ENCODE measurements at regions of chr2 and their contacts with region 1.

Region 1: DNA sequence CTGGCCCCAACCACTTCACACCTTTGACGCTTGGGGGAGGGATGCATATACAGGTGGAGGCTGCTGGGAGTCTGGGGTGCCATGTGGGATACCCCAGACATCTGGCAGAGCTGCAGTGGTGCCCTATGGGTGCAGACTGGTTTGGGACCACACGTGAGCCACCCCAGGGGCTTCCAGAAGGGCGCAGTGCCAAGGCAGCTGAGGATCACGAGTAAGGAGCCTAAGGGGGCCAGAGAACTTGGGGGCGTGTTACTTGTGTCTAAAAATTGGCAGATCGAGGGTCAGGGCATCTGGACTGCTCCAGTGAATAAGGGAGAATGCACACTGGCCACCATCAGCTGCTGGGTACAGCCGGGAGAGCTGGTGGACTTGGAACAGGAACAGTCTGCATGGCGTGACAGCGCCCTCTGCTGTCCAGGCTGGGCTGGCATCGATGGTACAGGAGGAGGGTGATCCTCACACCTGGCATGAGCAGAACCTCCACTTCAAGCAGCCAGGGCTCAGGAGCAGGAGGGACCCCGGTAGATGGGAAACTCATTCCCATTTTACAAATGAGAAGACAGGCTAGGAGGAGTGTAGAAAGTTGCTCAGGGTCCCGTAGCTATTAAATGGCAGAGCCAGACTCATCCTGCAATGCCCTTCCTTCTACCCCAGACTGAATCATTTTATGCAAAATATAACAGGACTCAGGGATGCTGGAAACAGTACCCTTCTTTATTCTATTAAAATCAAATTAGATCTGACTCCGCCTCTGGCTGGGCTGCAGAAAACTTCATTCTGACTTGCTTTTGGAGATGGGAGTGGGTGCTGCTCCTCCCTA is 60.4 kb downstream of the ATOH8 start:
- DNase-seq: peak; percentile 88 to 95 (median 89)
- ATAC-seq: peak; percentile 93 to 96 (median 96)
- H3K4me3 ChIP-seq: no peak overlapping the region
- H3K27ac ChIP-seq: no peak overlapping the region
- H3K4me1 ChIP-seq: peaks cover 0 to 22% (median 12%) of the 10 kb centered on the region in 12 donors
- H3K27me3 ChIP-seq: no peaks in the 10 kb centered on the region
- CTCF ChIP-seq: peak; percentile 91 to 99 (median 94)
- POLR2A ChIP-seq: no peak

Region 2: GRCh38 chr2:85635636-85636035 is 178.6 kb before region 1 on chr2:
- intact Hi-C with region 1: loop called (anchors 1 to 10 kb)
- DNase-seq: no peak
- ATAC-seq: peak in 2 of 4 donors; percentile 59 to 69
- H3K4me3 ChIP-seq: no peak overlapping the region
- H3K27ac ChIP-seq: peak overlapping the region in 1 of 12 donors; percentile 3
- H3K4me1 ChIP-seq: peaks cover 0 to 8% (median 0%) of the 10 kb centered on the region in 12 donors
- H3K27me3 ChIP-seq: no peaks in the 10 kb centered on the region
- CTCF ChIP-seq: no peak
- POLR2A ChIP-seq: no peak

Region 3: GRCh38 chr2:85648619-85649018 is 165.6 kb before region 1 on chr2:
- intact Hi-C with region 1: loop called in 3 of 10 experiments (anchors 2 to 5 kb)
- DNase-seq: peak in 1 of 5 donors; percentile 37
- ATAC-seq: peak in 3 of 4 donors; percentile 35 to 60 (median 38)
- H3K4me3 ChIP-seq: no peak overlapping the region
- H3K27ac ChIP-seq: peak overlapping the region in 8 of 12 donors; percentile 13 to 68 (median 46)
- H3K4me1 ChIP-seq: peaks cover 0 to 16% (median 11%) of the 10 kb centered on the region in 12 donors
- H3K27me3 ChIP-seq: no peaks in the 10 kb centered on the region
- CTCF ChIP-seq: peak; percentile 8 to 56 (median 42)
- POLR2A ChIP-seq: no peak

Region 4: DNA sequence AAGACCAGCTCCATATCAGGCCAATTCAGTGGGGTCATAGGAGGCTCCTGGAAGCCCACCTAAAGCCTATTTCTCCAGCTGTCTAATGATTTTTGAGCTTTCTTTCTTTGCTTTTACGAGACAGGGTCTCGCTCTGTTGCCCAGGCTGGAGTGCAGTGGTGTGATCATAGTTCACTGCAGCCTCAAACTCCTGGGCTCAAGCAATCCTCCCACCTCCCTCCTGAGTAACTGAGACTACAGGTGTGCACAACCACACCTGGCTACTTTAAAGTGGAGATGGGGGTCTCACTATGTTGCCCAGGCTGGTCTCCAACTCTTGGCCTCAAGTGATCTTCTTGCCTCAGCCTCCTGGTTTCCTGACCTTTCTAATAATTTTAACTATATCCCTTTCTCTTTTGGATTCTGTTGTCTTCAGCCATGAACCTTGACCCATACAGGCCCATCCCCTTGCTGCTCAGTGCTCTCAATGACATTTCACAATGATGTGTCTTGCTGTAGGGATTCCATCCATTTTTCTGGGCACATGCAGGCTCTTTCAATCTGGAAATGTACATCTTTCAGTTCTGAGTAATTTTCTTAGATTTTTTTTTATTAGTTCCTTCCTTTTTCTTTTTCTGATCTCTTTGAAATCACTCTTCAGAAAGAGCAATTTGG is 90.4 kb before region 1 on chr2:
- intact Hi-C with region 1: loop called (anchors 1 to 2 kb)
- DNase-seq: no peak
- ATAC-seq: no peak
- H3K4me3 ChIP-seq: no peak overlapping the region
- H3K27ac ChIP-seq: peak overlapping the region in 1 of 12 donors; percentile 28
- H3K4me1 ChIP-seq: peaks cover 0 to 47% (median 20%) of the 10 kb centered on the region in 12 donors
- H3K27me3 ChIP-seq: no peaks in the 10 kb centered on the region
- CTCF ChIP-seq: no peak
- POLR2A ChIP-seq: no peak

Region 5: GRCh38 chr2:85737481-85737880 is 76.7 kb before region 1 on chr2:
- intact Hi-C with region 1: no loop called
- DNase-seq: peak in 4 of 5 donors; percentile 72 to 78 (median 73)
- ATAC-seq: peak; percentile 44 to 69 (median 60)
- H3K4me3 ChIP-seq: no peak overlapping the region
- H3K27ac ChIP-seq: peak overlapping the region in 9 of 12 donors; percentile 31 to 69 (median 56)
- H3K4me1 ChIP-seq: peaks cover 0 to 66% (median 33%) of the 10 kb centered on the region in 12 donors
- H3K27me3 ChIP-seq: no peaks in the 10 kb centered on the region
- CTCF ChIP-seq: no peak
- POLR2A ChIP-seq: no peak

Region 6: DNA sequence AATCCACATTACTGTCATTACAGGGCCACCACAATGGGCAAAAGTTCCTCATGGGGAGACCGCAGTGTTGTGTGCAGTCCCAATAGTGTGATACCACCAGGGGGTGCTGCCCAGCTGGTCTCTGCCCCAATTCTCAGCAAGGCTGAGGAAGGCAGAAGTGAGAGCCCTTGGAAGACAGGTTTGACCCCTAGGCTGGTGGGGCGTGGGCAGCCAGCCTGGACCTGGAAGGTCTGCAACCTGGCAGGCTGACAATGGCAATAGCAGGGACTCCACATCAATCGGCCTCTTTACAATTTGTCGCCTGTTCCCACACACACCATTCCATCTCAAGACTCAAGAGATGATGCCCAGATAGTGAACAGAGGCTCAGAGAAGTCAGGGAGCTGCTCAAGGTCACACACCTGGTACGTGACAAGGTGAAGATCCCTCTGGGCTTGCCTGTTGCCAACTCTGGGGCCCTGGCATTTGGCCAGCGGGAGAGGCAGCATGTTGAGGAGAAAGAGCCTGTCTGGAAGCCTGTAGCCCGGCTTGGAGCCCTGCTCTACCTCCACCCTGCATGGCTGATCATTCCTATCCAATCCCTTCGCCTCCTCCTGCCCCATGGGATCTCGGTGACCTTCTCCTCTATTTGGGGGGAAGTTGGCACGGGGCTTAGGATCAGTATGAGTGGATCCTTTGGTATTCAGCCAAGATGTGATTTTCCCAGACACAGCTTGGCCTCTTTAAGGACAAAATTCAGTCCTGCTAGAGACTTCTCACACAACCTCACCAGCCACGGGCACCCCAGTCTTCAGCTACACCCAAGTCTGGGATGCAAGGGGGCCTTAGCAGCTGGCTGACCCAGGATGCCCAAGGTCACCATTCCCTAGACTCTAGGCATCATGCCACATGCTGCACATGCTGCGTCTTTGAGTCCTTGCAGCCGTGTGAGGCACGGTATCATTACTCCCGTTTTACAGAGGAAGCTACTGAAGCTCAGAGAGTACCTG is 63.3 kb before region 1 on chr2:
- intact Hi-C with region 1: loop called in 3 of 10 experiments (anchors 1 to 5 kb)
- DNase-seq: peak; percentile 75 to 84 (median 81)
- ATAC-seq: peak; percentile 57 to 71 (median 62)
- H3K4me3 ChIP-seq: peak overlapping the region in 1 of 12 donors; percentile 10
- H3K27ac ChIP-seq: peak overlapping the region in 10 of 12 donors; percentile 2 to 96 (median 28)
- H3K4me1 ChIP-seq: peaks cover 15 to 79% (median 63%) of the 10 kb centered on the region in 12 donors
- H3K27me3 ChIP-seq: peaks cover 0 to 37% (median 0%) of the 10 kb centered on the region in 9 donors
- CTCF ChIP-seq: peak; percentile 76 to 87 (median 82)
- POLR2A ChIP-seq: no peak

Region 7: DNA sequence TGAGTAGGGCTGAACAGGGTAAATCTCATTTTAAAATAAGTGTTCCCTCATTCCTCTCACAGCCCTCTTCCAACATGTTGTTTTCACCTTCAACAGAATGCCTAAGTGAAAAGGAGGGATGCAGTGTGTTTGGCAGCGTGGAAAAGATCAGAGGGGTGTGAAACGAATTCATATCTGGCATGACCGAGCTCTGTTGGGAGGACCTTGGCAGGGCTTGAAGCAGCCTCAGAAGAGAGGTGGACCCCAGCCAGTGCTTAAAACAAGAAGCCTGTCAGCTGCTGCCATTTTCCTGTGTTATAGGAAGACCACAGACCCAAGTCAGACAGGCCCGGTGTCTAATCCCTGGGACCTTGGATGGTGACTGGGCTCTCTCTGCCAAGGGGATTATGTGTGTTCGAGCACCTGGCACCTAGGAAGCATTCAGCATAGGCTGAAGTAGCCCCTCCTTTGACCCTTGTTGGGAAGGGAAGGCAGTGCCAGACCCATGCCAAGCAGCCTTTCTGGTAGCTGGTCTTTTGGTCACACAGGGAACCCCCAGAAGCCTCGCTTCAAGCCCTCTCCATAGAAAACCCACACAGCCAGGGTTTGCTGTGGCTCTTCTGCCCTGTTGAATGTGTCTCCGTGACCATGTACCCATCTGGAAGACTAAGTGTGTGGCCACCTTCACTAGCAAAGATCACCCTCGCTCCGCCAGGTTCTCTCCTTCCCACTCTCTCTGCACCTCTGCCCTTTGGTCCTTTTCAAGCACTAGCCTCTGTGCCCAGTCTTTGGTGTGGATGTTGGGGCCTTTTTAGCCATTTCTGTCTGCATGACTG is 162.1 kb after region 1 on chr2:
- intact Hi-C with region 1: no loop called
- DNase-seq: peak in 2 of 5 donors; percentile 43 to 73
- ATAC-seq: peak; percentile 34 to 78 (median 68)
- H3K4me3 ChIP-seq: no peak overlapping the region
- H3K27ac ChIP-seq: no peak overlapping the region
- H3K4me1 ChIP-seq: peaks cover 0 to 25% (median 13%) of the 10 kb centered on the region in 12 donors
- H3K27me3 ChIP-seq: peaks cover 0 to 36% (median 0%) of the 10 kb centered on the region in 9 donors
- CTCF ChIP-seq: no peak
- POLR2A ChIP-seq: no peak

Measured in heart left ventricle (tissue), 16 donors.